IMR-90 (cell line): ENCODE measurements at regions of chr12 and their contacts with region 1.

Region 1: DNA sequence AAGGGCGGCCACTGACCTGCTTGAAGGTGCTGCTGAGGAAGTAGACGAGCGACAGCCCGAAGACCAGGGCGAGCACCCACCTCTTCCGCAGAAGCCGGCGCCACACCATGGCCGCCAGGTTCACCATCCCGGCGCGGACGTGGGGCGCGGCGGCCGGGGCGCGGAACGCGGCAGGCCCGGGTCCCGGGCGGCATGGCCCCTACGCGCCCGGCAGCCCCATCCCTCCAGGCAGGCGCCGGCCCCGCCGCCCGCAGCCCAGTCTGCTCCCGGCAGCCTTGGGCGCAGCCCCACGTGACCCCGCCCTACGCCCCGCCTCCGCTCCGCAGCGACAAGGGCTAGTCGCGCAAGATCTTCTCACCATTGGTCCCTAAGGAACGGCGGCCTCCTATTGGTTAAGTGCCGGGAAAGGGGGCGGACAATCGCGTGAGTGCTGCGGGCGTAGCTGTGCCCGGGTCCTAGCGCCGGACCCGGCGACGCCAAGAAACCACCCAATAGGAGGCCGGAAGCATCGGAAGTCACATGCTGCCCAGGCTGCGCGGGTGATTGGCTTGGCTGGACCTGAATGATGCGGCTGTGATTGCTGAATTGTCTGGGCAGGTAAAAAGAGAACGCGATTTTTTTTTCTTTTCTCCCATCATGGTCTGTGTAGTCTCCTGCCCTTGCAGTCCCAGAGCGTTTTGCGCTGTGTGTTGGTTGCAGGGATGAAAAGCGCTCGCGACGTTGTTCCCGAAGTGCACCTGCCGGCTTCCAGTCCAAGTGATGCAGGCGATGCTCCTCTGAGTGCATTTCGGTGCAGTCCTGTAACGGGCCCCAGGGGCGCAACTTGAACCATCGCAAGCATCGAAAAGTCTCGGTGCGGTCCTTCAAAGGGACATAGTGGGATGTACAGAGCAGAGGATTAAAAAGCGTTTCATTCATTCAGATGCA is at the starts of genes RNFT2 and SPRING1:
- DNase-seq: peak; percentile 99
- ATAC-seq: peak; percentile 99
- H3K4me3 ChIP-seq: peak within 1 kb of the TSS; percentile 79
- H3K27ac ChIP-seq: peak within 1 kb of the TSS; percentile 60
- H3K4me1 ChIP-seq: peaks cover 2% of the 10 kb centered on the region; the same call in 1 of the 2 replicates
- H3K27me3 ChIP-seq: no peaks in the 10 kb centered on the region
- CTCF ChIP-seq: 0 out of 2 replicates have a peak, but pooled peaks have one; percentile 6
- POLR2A ChIP-seq: peak; percentile 87
- RAD21 ChIP-seq: 0 out of 2 replicates have a peak, but pooled peaks have one; percentile 3
- total RNA-seq, gene RNFT2: 1.7 and 2.3 TPM in 2 replicates
- total RNA-seq, gene SPRING1: 14.0 and 16.4 TPM in 2 replicates

Region 2: DNA sequence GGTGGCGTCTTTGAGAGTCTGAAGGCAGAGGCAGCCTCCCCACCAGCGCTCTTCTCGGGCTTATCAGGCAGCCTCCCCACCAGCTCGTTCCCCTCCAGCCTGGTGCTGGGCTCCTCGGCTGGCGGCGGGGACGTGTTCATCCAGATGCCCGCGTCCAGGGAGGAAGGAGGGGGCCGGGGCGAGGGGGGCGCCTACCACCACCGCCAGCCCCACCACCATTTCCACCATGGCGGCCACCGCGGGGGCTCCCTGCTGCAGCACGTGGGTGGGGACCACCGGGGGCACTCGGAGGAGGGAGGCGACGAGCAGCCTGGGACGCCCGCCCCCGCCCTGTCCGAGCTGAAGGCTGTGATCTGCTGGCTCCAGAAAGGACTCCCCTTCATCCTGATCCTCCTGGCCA is 11.8 kb after region 1 on chr12:
- CTCF ChIA-PET with region 1: no interaction called
- POLR2A ChIA-PET with region 1: no interaction called
- dilution Hi-C with region 1: no loop called
- in situ Hi-C with region 1: no loop called
- intact Hi-C with region 1: no loop called
- DNase-seq: no peak
- ATAC-seq: no peak
- H3K4me3 ChIP-seq: no peak overlapping the region
- H3K27ac ChIP-seq: no peak overlapping the region
- H3K4me1 ChIP-seq: no peaks in the 10 kb centered on the region
- H3K27me3 ChIP-seq: no peaks in the 10 kb centered on the region
- CTCF ChIP-seq: no peak
- POLR2A ChIP-seq: no peak
- RAD21 ChIP-seq: no peak

Region 3: DNA sequence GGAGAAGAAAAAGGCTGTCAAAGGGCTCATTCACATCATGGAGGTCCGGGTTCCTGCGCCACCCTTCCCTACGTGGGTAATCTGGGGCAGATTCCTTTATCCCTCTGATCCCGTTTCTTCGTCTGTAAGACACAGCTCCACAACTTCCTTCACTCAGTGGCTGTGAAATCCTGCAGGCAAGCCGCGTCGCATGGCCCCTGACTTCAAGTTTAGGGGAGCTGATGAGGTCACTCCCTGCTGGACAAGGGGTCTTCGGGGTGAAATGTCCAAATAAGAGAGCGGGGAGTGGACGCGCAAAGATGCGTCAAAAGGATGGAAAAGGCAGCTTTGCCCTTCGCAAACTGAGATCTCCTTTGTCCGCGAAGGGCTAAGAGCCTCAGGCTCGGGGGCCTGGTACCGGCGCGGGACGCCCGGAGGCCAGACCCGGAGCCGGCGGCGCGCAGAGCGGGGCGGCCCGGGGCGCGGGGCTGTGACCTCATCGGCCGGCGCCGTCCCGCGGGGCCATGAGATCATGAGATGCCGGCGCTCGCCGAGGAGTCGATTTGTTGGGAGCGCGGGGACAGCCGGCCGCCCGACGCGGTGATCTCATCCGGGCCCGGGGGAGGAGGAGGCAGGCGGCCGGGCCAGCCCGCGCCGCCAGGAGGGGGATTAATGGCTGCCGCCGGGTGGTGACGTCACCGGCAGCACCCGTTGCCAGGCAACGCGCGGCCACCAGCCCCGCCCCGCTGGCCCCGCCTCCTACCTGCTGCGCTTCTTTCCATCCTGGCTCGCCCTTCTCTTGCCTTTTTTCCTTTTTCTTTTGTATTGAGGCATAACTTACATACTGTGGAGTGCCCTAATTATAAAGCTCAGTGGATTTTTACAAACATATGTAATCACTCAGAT is 81.2 kb after region 1 on chr12:
- CTCF ChIA-PET with region 1: no interaction called
- POLR2A ChIA-PET with region 1: no interaction called
- dilution Hi-C with region 1: no loop called
- in situ Hi-C with region 1: no loop called
- intact Hi-C with region 1: loop called (anchors 1 kb)
- DNase-seq: peak; percentile 92
- ATAC-seq: peak; percentile 100
- H3K4me3 ChIP-seq: peak overlapping the region; percentile 93
- H3K27ac ChIP-seq: peak overlapping the region; percentile 96
- H3K4me1 ChIP-seq: peaks cover 6% of the 10 kb centered on the region
- H3K27me3 ChIP-seq: no peaks in the 10 kb centered on the region
- CTCF ChIP-seq: no peak
- POLR2A ChIP-seq: peak; percentile 87
- RAD21 ChIP-seq: no peak

Region 4: GRCh38 chr12:116955382-116956021 is 217.5 kb after region 1 on chr12:
- CTCF ChIA-PET with region 1: no interaction called
- POLR2A ChIA-PET with region 1: interaction called, 24 read pairs
- dilution Hi-C with region 1: no loop called
- in situ Hi-C with region 1: no loop called
- intact Hi-C with region 1: no loop called
- DNase-seq: peak; percentile 26
- ATAC-seq: no peak
- H3K4me3 ChIP-seq: no peak overlapping the region
- H3K27ac ChIP-seq: no peak overlapping the region
- H3K4me1 ChIP-seq: peaks cover 8% of the 10 kb centered on the region; the same call in 1 of the 2 replicates
- H3K27me3 ChIP-seq: no peaks in the 10 kb centered on the region
- CTCF ChIP-seq: no peak
- POLR2A ChIP-seq: no peak
- RAD21 ChIP-seq: no peak